Panc1 (cell line): ENCODE measurements at regions of chr15 and their contacts with region 1.

Region 1: DNA sequence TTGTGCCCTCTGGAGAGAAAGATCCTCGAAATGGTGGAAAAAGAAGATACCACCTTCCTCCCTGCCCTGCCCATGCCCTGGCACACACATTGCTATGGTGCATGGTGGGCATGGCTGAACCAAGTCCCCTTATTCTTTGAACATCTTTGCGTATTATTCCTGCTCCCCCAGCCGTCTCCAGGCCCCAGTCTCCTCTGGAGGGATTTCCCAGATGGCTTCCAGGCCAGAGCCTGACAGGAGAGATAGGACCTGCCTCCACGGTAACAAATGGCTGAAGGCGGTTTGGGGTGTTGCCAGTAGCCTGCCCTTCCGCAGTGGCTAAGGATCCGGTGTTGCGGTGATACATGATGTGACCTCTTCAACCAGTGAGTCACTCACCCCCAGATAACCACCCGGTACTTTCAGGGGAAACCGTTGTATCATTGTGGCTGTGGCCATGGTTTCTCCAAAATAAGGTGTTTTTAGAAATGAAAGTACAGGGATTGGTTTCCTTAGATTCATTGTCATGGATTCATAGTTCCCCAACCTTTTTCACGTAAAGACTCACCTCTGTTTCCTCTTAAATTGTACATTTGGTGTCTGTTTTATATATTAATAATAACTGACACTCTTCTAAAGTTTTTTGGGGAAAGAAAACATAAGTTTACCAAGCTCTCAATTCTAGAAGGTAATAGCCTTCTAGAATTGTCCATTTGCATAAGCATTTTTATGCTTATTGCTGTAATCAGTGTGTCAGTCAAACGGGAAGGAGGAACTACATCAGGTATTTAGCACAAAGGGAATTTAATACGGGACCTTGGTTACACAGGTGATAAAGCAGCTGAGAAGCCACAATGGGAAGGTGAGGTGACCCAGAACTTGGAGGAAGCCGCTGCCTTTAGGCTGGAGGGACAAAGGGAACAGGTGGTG is 25.9 kb downstream of the SMAD3 start:
- DNase-seq: no peak
- ATAC-seq: peak; percentile 60
- H3K4me3 ChIP-seq: peak overlapping the region; percentile 2 to 29; a peak in 3 of 4 replicates
- H3K27ac ChIP-seq: peak overlapping the region; percentile 100
- H3K4me1 ChIP-seq: peaks cover 100% of the 10 kb centered on the region
- H3K27me3 ChIP-seq: no peaks in the 10 kb centered on the region
- CTCF ChIP-seq: no peak

Region 2: GRCh38 chr15:66815322-66815721 is 276.0 kb before region 1 on chr15:
- CTCF ChIA-PET with region 1: no interaction called
- POLR2A ChIA-PET with region 1: no interaction called
- in situ Hi-C with region 1: no loop called
- intact Hi-C with region 1: no loop called
- DNase-seq: no peak
- ATAC-seq: peak; percentile 60
- H3K4me3 ChIP-seq: no peak overlapping the region
- H3K27ac ChIP-seq: no peak overlapping the region
- H3K4me1 ChIP-seq: no peaks in the 10 kb centered on the region
- H3K27me3 ChIP-seq: no peaks in the 10 kb centered on the region
- CTCF ChIP-seq: no peak

Region 3: GRCh38 chr15:66841953-66842681 is 249.2 kb before region 1 on chr15:
- CTCF ChIA-PET with region 1: no interaction called
- POLR2A ChIA-PET with region 1: no interaction called
- in situ Hi-C with region 1: no loop called
- intact Hi-C with region 1: no loop called
- DNase-seq: no peak
- ATAC-seq: peak; percentile 86
- H3K4me3 ChIP-seq: peak overlapping the region; percentile 45 to 62
- H3K27ac ChIP-seq: peak overlapping the region; percentile 84
- H3K4me1 ChIP-seq: peaks cover 36% of the 10 kb centered on the region
- H3K27me3 ChIP-seq: no peaks in the 10 kb centered on the region
- CTCF ChIP-seq: no peak

Region 4: DNA sequence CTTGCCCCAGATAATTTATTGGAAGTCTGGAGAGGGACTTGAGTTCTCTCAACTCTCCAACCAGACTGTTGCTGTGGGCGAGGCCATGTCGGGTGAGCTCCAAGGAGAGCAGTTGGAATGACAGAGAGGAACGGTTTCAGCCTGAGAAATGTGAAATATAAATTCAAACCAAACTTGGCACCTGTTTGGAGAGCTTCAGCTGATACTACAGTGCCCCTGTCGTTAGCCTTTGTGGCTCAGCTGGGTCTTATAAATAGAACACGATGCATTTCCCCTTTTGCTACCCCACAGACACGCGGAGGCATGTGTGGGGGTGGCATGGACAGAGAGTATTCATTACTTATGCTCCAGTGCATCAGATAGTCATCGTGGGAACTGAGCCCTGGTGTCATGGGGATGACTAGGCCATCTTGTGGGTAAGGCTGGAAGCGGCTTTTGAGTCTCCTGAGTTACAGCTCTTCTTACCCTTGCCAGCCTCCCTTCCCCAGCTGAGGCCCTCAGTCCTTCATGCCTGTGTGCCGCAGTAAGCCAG is 10.4 kb before region 1 on chr15:
- CTCF ChIA-PET with region 1: no interaction called
- POLR2A ChIA-PET with region 1: no interaction called
- in situ Hi-C with region 1: no loop called
- intact Hi-C with region 1: no loop called
- DNase-seq: no peak
- ATAC-seq: peak; percentile 10
- H3K4me3 ChIP-seq: no peak overlapping the region
- H3K27ac ChIP-seq: peak overlapping the region; percentile 100
- H3K4me1 ChIP-seq: peaks cover 100% of the 10 kb centered on the region
- H3K27me3 ChIP-seq: no peaks in the 10 kb centered on the region
- CTCF ChIP-seq: peak; percentile 46; the same call in 1 of the 2 replicates

Region 5: GRCh38 chr15:67178569-67179210 is 87.4 kb after region 1 on chr15:
- CTCF ChIA-PET with region 1: no interaction called
- POLR2A ChIA-PET with region 1: interaction called, 13 read pairs
- in situ Hi-C with region 1: no loop called
- intact Hi-C with region 1: no loop called
- DNase-seq: peak; percentile 81
- ATAC-seq: peak; percentile 60
- H3K4me3 ChIP-seq: no peak overlapping the region
- H3K27ac ChIP-seq: peak overlapping the region; percentile 94
- H3K4me1 ChIP-seq: peaks cover 93% of the 10 kb centered on the region
- H3K27me3 ChIP-seq: no peaks in the 10 kb centered on the region
- CTCF ChIP-seq: no peak

Region 6: DNA sequence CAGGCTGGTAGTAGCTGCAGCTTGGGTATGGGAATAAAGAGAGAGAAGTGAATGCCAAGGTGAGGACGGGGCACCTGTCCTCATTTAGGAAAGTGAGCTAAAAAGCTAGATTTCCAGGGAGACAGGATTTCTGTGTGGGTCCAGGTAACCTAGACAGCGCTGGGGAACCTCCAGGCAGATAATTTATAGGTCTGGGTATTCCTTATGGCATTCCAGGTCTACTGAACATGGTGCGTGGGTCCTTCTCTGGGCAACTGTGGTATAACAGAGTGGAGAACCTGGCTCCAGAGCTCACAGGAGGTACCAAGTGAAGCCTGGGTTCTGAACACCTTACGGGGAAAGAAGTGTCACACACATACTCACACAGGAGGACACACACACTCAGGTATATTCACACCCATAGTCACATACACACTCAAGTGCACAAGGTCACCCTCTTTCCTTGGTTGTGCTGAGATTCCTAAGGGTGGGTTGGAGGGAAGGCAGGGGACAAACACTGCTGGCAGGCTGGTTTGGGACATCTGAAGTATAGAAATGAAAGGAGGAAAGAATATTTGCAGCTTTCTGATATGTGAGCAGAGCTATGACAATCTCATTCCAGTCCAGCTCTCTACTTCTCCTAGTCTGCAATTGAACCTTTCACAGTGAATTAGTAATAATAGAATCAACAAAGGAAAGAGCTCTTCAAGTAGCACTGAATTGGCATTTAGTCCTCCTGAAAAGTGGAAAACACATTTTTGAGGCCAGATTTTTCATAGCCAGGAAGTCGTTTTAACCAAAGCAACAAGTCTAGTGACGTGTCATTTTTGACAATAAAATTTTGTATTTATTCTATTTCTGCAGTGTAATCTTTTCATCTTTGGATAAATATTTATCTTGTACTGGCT is 1378.1 kb after region 1 on chr15:
- CTCF ChIA-PET with region 1: no interaction called
- POLR2A ChIA-PET with region 1: no interaction called
- in situ Hi-C with region 1: no loop called
- intact Hi-C with region 1: no loop called
- DNase-seq: no peak
- ATAC-seq: no peak
- H3K4me3 ChIP-seq: no peak overlapping the region
- H3K27ac ChIP-seq: no peak overlapping the region
- H3K4me1 ChIP-seq: no peaks in the 10 kb centered on the region
- H3K27me3 ChIP-seq: peaks cover 12% of the 10 kb centered on the region
- CTCF ChIP-seq: no peak